ENCODE measurements at regions of chrX and their contacts with region 1.

Region 1: GRCh38 chrX:40013266-40014195 is 84.2 kb downstream of the BCOR start:
- DNase-seq: peak; percentile 76 to 77
- H3K4me3 ChIP-seq: peak overlapping the region; percentile 53 to 56
- H3K27ac ChIP-seq: peak overlapping the region; percentile 84 to 93
- H3K4me1 ChIP-seq: no peaks in the 10 kb centered on the region
- H3K27me3 ChIP-seq: no peaks in the 10 kb centered on the region
- CTCF ChIP-seq: no peak
- POLR2A ChIP-seq: peak in 1 of 2 donors; percentile 25

Region 2: DNA sequence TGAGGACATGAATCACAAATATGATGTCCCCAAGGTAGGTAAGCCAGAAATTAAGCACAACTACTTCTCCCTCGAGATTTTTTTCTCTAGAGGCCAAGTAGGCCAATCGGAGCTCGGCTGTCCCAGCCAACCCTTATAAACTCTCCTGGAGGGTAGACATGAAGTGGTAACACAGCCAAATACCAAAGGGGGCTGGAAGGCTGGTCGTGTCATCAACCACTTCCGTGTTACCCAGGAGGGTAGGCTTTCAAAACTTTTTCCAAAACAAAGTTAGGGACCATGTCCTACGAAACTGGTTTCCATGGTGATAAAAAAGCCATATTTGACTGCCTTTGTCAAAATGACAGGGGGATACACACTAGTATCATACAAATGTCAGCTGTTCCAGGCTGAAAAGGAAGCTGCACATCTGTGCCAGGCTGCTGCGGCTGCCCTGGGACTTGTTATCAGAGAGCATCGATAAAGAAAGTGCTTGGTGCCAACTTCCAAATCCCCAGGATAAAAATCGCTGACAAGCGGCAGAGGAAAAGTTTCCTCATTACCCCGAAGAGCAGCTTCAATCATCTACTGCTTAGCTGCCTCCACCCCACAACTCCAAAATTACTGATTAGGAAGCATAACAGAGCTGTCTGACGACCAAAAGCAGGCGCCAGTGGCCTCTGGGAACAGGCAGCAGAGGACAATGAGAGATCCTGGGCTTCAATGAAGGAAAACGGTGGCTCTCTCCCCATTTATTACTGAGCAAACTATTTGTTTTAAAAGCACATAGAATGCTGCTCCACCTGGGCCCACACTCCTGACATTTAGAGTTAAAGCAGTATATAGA is 63.4 kb after region 1 on chrX:
- intact Hi-C with region 1: no loop called
- DNase-seq: no peak
- H3K4me3 ChIP-seq: no peak overlapping the region
- H3K27ac ChIP-seq: no peak overlapping the region
- H3K4me1 ChIP-seq: no peaks in the 10 kb centered on the region
- H3K27me3 ChIP-seq: no peaks in the 10 kb centered on the region
- CTCF ChIP-seq: no peak
- POLR2A ChIP-seq: no peak

Region 3: DNA sequence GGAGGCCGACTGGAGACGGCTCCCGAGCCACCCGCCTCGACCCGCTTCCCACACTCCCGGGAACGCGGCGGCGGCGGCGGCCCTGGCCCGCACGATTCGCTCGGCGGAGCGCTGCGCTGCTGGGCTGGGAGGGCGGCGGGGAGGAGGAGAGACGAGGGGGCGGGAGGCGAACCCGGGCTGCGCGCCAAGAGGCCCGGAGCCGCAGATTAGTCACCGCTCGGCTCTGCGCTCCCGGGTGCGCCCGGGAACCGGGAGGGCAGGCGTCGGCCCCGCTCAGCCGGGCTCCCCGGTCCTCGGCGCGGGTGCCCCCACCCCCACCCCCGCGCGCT is 95.4 kb after region 1 on chrX:
- intact Hi-C with region 1: loop called (anchors 10 kb)
- DNase-seq: peak; percentile 82 to 84
- H3K4me3 ChIP-seq: peak overlapping the region; percentile 32 to 55
- H3K27ac ChIP-seq: peak overlapping the region; percentile 89 to 97
- H3K4me1 ChIP-seq: peaks cover 0 to 18% of the 10 kb centered on the region in 2 donors
- H3K27me3 ChIP-seq: peaks cover 3 to 17% of the 10 kb centered on the region in 2 donors
- CTCF ChIP-seq: no peak
- POLR2A ChIP-seq: peak in 1 of 2 donors; percentile 69

Region 4: GRCh38 chrX:40153335-40154249 is 140.1 kb after region 1 on chrX:
- intact Hi-C with region 1: no loop called
- DNase-seq: peak in 1 of 2 donors; percentile 58
- H3K4me3 ChIP-seq: peak overlapping the region; percentile 3 to 45
- H3K27ac ChIP-seq: peak overlapping the region; percentile 43 to 80
- H3K4me1 ChIP-seq: no peaks in the 10 kb centered on the region
- H3K27me3 ChIP-seq: peaks cover 0 to 3% of the 10 kb centered on the region in 2 donors
- CTCF ChIP-seq: peak in 1 of 4 experiments; percentile 37
- POLR2A ChIP-seq: no peak

Region 5: GRCh38 chrX:40169193-40170101 is 155.9 kb after region 1 on chrX:
- intact Hi-C with region 1: loop called (anchors 5 kb)
- DNase-seq: peak; percentile 55 to 73
- H3K4me3 ChIP-seq: no peak overlapping the region
- H3K27ac ChIP-seq: peak overlapping the region; percentile 30 to 93
- H3K4me1 ChIP-seq: peaks cover 0 to 7% of the 10 kb centered on the region in 2 donors
- H3K27me3 ChIP-seq: no peaks in the 10 kb centered on the region
- CTCF ChIP-seq: peak in 2 of 4 experiments; percentile 25 to 42
- POLR2A ChIP-seq: no peak

Region 6: DNA sequence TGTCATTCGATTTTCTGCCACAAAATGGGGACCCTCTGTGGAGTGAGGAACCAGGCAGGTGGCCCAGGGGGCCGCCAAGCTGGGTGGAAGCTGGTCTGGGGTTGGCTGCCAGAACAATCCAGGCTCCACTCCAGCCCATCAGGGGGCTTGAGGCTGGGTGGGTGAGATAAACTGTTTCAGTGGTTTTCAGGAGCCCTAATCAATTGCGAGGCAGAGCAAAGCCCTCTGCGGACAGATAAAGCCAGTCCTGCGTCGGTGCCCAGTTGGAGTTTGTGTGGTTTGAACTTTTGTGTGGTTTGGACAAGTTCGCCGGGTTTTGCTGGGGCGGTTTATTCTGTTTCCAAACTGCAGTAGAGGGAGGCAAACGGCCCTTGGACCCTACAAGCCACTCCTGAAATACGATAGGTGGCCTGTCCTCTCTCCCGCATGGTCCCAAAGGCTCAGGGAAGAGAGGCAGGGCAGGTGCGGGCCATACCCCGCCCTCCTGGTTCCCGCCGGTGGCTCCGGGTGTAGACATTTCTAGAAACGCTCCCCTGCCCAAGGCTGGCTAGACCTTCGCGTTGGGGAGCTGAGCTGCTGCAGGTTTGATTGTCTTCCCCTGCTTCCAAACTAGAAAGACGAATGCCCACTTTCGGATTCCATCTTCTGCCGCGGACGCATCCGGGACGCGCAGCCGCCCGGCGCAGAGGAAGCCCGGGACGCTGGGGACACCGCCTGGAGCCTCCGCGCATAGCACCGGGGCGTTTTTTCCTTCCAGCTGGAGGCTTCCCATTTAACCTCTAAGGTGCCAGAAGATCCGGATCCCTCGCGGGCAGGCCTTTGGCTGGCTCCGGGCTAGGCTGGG is 253.2 kb after region 1 on chrX:
- intact Hi-C with region 1: loop called (anchors 10 kb)
- DNase-seq: peak; percentile 58 to 75
- H3K4me3 ChIP-seq: peak overlapping the region; percentile 28 to 37
- H3K27ac ChIP-seq: peak overlapping the region; percentile 20 to 78
- H3K4me1 ChIP-seq: no peaks in the 10 kb centered on the region
- H3K27me3 ChIP-seq: no peaks in the 10 kb centered on the region
- CTCF ChIP-seq: peak; percentile 51 to 71 (median 61)
- POLR2A ChIP-seq: no peak